ENCODE measurements at regions of chr10 and their contacts with region 1.

Region 1: DNA sequence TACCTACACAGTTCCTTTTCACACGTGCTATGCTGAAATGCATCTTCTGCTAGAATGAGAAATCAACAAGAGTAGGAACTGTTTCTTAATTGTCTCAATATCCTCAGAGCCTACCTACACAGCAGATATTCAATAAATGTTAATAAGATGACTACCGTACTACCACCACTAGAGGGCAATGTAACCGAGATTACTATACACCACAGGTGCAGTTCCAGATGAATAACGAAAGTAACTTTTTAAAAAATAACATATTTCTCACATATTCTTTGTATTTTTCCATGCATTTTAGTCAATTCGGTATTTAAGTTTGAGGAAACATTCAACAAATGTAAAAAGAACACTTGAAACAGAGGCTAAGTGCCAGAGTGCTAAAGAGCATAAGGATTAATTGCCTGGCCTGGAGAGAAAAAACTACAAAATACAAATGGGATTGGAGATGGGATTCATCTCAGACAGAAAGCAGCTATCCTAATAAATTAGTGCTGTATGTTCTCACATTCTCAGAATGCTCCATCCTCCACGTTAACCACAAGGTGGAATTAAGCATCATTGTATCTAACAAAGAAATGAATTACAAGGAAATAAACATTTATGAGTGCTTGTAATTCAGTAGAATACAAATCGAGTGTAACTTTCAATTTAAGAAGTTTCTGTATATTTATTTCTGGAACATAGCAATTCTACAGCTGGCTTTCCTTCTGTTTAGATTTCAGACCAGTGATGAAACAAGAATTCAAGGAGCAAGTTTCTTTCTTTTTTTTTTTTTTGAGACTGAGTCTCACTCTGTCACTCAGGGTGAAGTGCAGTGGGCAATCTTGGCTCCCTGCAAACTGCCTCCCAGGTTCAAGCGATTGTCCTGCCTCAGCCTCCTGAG is 20.3 kb upstream of the HECTD2 start:
- DNase-seq: peak; percentile 77
- H3K4me3 Mint-ChIP-seq: no peak overlapping the region
- H3K27ac Mint-ChIP-seq: no peak overlapping the region
- H3K4me1 Mint-ChIP-seq: no peaks in the 10 kb centered on the region
- H3K27me3 Mint-ChIP-seq: peaks cover 42% of the 10 kb centered on the region
- CTCF ChIP-seq: peak; percentile 60

Region 2: DNA sequence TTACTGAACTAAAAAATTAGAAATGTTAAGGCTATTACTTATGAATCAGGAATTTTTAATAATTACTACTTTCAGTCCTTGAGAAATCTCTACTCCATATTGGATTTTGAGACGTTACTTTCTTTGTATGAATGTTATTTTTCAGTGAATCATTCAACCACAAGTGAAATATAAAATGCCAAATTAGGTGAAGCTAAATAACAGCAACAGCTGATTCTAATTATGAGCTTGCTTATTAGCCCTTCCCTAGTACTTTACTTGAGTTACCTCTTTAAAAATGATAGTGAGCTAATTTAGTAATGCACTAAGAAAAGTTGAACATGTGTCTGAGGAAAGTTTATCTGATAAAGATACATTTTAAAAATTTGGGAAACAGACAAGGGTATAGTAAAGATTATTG is 118.0 kb before region 1 on chr10:
- CTCF ChIA-PET with region 1: no interaction called
- POLR2A ChIA-PET with region 1: no interaction called
- intact Hi-C with region 1: no loop called
- DNase-seq: no peak
- H3K4me3 Mint-ChIP-seq: no peak overlapping the region
- H3K27ac Mint-ChIP-seq: no peak overlapping the region
- H3K4me1 Mint-ChIP-seq: peaks cover 5% of the 10 kb centered on the region
- H3K27me3 Mint-ChIP-seq: no peaks in the 10 kb centered on the region
- CTCF ChIP-seq: no peak

Region 3: GRCh38 chr10:91340613-91341362 is 49.1 kb before region 1 on chr10:
- CTCF ChIA-PET with region 1: no interaction called
- POLR2A ChIA-PET with region 1: no interaction called
- intact Hi-C with region 1: no loop called
- DNase-seq: peak; percentile 86
- H3K4me3 Mint-ChIP-seq: no peak overlapping the region
- H3K27ac Mint-ChIP-seq: peak overlapping the region; percentile 90
- H3K4me1 Mint-ChIP-seq: peaks cover 19% of the 10 kb centered on the region
- H3K27me3 Mint-ChIP-seq: no peaks in the 10 kb centered on the region
- CTCF ChIP-seq: no peak

Region 4: GRCh38 chr10:91367127-91367531 is 22.7 kb before region 1 on chr10:
- CTCF ChIA-PET with region 1: interaction called, 10 read pairs
- POLR2A ChIA-PET with region 1: no interaction called
- intact Hi-C with region 1: no loop called
- DNase-seq: no peak
- H3K4me3 Mint-ChIP-seq: no peak overlapping the region
- H3K27ac Mint-ChIP-seq: no peak overlapping the region
- H3K4me1 Mint-ChIP-seq: peaks cover 9% of the 10 kb centered on the region
- H3K27me3 Mint-ChIP-seq: no peaks in the 10 kb centered on the region
- CTCF ChIP-seq: no peak

Region 5: DNA sequence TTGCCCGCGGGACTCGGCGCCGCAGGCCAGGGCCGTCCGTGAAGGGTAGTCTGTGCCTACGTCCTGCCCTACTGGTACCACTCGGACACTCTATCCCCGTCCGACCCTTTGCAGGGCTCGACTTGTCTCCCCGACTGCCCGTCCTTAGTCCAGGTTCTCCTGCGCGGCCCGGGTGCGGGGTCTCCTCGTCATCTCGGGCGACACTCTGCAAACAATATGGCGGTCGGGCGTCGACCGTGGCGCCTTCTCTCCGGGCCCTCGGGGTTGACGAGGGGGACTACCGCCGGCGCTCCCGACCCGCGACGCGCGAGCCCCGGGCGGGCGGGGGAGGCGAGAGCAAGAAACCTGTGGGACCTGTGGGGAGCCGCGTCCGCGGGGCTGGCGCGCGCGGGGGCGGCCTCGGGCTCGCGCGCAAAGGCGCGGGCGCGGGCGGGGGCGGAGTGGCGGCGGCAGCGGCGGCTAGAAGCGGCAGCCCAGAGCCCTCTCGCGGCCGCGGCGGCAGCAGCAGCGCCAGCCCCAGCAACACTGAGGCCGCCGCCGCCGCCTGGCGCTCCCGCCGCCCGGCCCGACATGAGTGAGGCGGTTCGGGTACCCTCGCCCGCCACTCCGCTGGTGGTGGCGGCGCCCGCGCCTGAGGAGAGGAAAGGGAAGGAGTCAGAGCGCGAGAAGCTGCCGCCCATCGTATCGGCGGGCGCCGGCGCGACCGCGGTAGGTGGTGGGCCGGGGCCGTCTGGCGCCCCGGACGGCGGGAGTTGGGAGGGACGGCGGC is 20.2 kb after region 1 on chr10 and contains the start of gene HECTD2:
- CTCF ChIA-PET with region 1: interaction called, 5 read pairs
- POLR2A ChIA-PET with region 1: interaction called, 9 read pairs
- intact Hi-C with region 1: loop called (anchors 2 kb)
- DNase-seq: peak; percentile 72
- H3K4me3 Mint-ChIP-seq: peak within 1 kb of the TSS; percentile 95
- H3K27ac Mint-ChIP-seq: peak within 1 kb of the TSS; percentile 99
- H3K4me1 Mint-ChIP-seq: peaks cover 7% of the 10 kb centered on the region
- H3K27me3 Mint-ChIP-seq: no peaks in the 10 kb centered on the region
- CTCF ChIP-seq: peak; percentile 37
- total RNA-seq, gene HECTD2: 5.9 and 8.2 TPM in 2 replicates

Region 6: DNA sequence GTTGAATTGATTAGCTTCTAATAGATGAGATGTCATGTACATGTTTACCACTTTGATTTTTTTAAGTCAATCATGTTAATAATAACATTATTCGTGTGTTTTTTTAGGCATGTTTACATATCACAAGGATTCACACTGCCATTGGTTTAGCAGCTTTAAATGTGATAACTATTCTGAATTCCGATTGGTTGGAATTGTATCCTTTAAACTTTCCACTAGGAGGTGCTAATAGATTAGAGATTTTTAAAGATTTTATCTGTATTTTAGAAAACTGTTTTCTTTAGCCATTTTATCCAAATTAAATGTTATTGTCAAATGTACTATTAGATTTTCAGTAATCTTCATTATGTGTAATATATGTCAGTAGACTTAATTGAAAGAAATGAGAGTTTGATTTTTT is 103.4 kb after region 1 on chr10:
- CTCF ChIA-PET with region 1: interaction called, 5 read pairs
- POLR2A ChIA-PET with region 1: no interaction called
- intact Hi-C with region 1: loop called (anchors 1 kb)
- DNase-seq: peak; percentile 43
- H3K4me3 Mint-ChIP-seq: no peak overlapping the region
- H3K27ac Mint-ChIP-seq: no peak overlapping the region
- H3K4me1 Mint-ChIP-seq: no peaks in the 10 kb centered on the region
- H3K27me3 Mint-ChIP-seq: no peaks in the 10 kb centered on the region
- CTCF ChIP-seq: peak; percentile 36

Region 7: DNA sequence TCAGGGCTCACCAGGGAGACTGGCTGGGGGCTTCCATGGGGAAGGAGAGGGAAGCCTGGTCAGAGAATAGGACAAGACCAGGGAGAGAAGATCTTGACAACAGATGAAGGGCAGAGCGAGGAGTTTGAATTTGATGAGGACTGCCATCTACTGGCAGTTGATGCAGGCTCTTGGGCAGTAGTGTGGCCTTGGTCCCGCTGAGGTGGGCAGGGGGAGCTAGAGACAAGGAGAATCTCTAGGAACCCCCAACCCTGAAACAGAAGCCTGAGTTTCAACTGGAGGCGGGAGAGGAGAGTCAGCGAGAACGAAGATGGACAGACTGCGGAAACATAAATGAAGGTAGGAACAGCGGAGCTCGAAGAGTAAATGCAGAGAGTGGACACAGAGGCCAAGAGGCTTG is 162.0 kb after region 1 on chr10:
- CTCF ChIA-PET with region 1: no interaction called
- POLR2A ChIA-PET with region 1: no interaction called
- intact Hi-C with region 1: loop called (anchors 2 kb)
- DNase-seq: peak; percentile 45
- H3K4me3 Mint-ChIP-seq: no peak overlapping the region
- H3K27ac Mint-ChIP-seq: no peak overlapping the region
- H3K4me1 Mint-ChIP-seq: peaks cover 17% of the 10 kb centered on the region
- H3K27me3 Mint-ChIP-seq: no peaks in the 10 kb centered on the region
- CTCF ChIP-seq: peak; percentile 35

Region 8: DNA sequence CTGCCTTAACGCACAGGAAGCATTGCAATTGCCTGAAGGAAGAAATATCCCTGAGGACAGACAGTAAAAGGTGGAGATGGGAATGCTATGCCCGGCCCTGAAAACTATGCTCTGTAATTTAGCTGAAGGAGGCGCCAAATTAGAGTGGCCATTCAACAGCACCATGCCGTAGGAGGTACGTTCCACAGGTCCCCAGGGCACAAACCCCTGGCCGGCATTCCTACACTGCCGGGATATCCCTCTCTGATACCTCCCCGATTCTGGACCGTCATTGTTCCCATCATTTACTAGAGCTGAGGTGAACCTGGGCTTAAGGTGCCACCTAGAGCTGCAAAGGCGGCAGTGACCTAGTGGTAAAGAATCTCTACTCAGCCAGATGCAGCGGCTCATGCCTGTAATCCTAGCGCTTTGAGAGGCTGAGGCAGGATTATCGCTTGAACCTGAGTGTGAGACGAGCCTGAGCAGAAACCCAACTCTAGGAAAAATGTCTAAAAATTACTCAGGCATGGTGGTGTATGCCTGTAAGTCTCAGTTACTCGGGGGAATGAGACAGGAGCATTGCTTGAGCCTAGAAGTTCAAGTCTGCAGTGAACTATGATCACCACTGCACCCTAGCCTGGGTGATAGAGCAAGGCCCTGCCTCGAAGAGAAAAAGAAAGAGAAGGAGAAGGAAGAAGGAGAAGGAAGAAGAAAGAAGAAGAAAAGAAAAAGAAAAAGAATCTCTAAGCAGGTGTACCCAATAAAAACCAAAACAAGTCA is 355.4 kb after region 1 on chr10:
- CTCF ChIA-PET with region 1: interaction called, 4 read pairs
- POLR2A ChIA-PET with region 1: no interaction called
- intact Hi-C with region 1: loop called (anchors 2 kb)
- DNase-seq: peak; percentile 76
- H3K4me3 Mint-ChIP-seq: no peak overlapping the region
- H3K27ac Mint-ChIP-seq: no peak overlapping the region
- H3K4me1 Mint-ChIP-seq: no peaks in the 10 kb centered on the region
- H3K27me3 Mint-ChIP-seq: peaks cover 48% of the 10 kb centered on the region
- CTCF ChIP-seq: peak; percentile 59

Measured in MCF 10A (cell line).